Ovary (tissue), 10 donors: ENCODE measurements at regions of chr11 and their contacts with region 1.

Region 1: GRCh38 chr11:76551400-76551799 is 106.6 kb downstream of the EMSY start:
- DNase-seq: no peak
- H3K4me3 ChIP-seq: no peak overlapping the region
- H3K27ac ChIP-seq: no peak overlapping the region
- H3K4me1 ChIP-seq: no peaks in the 10 kb centered on the region
- H3K27me3 ChIP-seq: no peaks in the 10 kb centered on the region
- CTCF ChIP-seq: peak in 1 of 3 donors; percentile 28
- EP300 ChIP-seq: no peak
- POLR2A ChIP-seq: no peak

Region 2: DNA sequence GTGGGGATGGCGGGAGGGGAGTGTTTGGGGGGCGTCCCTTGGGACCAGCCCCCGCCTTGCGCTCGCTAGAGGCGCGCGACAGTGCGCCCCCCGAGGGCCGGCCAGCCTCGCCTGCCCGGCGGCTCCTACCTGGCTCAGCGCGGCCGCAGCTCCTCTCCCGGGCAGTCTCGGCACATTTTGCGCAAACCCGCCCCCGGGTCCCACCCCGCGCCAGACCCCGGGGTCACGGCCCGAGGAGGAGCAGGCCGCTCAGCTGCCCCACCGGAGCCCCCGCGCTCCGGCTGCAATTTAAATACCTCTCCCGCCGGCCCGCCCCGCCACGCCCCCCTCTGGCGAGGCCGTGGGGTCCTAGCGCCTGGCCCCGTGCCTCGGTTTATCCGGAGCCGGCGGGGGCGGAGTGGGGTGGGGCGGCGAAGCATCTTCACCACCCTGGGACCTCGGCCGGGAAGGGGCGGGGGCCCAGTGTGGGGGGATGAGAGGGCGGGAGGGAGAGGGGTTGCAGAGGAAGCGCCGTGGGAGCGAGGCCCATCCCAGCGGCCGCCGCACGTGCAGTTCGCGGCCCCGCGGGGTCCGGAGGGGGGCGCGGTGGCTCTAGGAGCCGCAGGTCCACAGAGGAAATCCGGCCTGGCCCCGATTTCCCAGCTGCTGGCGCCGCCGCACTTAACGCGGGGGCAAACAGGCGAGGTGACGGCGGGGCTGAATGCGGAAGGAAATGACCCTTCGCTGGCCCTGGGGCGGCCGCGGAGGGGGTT is 119.3 kb after region 1 on chr11 and contains the start of gene LRRC32:
- intact Hi-C with region 1: loop called in 1 of 4 experiments (anchors 5 kb)
- DNase-seq: peak; percentile 61 to 81 (median 75)
- H3K4me3 ChIP-seq: peak within 1 kb of the TSS; percentile 65
- H3K27ac ChIP-seq: peak within 1 kb of the TSS in 1 of 2 donors; percentile 54
- H3K4me1 ChIP-seq: peaks cover 16% of the 10 kb centered on the region
- H3K27me3 ChIP-seq: no peaks in the 10 kb centered on the region
- CTCF ChIP-seq: no peak
- EP300 ChIP-seq: no peak
- POLR2A ChIP-seq: no peak
- total RNA-seq, gene LRRC32: 3.2 to 47.1 (median 29.5) TPM

Region 3: DNA sequence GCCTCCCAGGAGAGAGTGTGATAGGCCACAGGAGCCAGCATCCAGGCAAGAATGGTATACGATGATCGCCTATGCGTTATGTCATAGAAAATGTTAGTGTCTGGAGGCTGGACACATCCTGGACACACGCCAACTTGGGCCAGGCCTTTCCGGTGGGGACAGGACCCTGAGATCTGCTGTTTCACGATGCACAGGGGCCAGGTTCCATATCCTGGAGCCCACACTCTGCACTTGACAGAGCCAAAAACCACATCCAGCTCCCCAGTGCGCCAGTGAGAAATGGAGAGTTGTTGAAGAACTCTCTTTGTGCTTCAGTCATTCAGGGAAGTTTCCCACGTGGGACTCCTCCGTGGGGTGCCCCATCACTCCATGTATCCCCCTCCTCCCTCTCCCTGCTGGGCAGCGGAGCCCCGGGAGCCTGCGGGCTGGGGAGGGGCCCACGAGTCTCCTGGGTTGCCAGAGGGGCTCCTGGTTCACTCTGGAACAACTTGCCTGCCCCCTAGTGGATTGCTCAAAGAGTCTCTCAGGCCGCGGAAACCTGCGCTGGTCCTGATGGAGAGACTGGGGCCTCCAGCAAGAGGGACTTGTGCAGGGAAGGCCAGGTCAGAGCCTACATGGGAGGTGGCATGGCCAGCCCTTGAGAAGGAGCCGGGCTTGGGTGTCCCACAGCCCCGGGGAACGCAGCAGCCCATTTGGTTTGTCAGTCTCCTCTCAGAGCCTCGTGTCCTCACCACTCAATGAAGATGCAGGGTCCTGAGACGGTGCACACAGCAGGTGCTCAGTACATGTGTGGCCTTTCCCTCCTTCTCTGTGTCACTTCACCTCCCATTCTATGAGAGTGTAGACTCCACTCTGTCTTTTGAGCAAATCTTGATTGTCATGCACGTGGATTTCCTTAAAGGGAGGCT is 129.4 kb after region 1 on chr11:
- intact Hi-C with region 1: loop called in 1 of 4 experiments (anchors 5 kb)
- DNase-seq: peak; percentile 70 to 82 (median 79)
- H3K4me3 ChIP-seq: no peak overlapping the region
- H3K27ac ChIP-seq: no peak overlapping the region
- H3K4me1 ChIP-seq: no peaks in the 10 kb centered on the region
- H3K27me3 ChIP-seq: no peaks in the 10 kb centered on the region
- CTCF ChIP-seq: peak; percentile 75 to 95 (median 84)
- EP300 ChIP-seq: no peak
- POLR2A ChIP-seq: no peak

Region 4: DNA sequence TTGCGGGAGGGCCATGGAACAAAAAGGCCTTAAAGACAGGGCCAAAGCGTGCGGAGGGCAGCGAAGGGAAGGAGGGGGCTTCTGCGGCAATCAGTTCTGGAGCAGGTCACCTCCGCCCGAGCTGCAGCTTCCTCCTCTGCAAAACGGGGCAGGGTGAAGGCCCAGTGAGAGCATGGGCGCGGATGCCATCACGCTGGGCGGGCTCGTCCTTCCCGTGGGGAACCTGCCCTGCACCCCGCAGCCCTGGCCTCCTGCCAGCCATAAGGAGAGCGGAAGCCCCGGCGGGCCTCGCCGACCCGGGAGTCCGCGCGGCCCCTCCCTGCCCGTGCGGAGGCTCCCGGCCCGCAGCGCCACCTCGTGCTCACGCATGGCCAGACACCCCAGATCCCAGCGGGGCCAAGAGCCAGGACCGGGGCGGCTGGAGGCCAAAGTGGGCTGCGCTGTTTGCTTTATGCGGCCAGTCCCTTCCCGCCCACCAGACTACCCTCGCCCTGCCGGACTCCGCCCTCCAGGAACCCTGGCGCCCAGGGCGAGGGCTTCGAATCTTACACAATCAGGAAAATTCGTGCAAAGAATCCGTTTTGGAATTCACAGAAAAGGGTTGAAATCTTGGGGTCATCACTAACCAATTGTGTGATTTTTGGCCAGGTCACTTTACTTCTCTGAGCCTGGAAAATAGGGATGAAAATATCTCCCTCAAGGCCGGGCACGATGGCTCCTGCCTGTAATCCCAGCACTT is 247.8 kb after region 1 on chr11:
- intact Hi-C with region 1: no loop called
- DNase-seq: peak; percentile 84 to 95 (median 92)
- H3K4me3 ChIP-seq: peak overlapping the region; percentile 1
- H3K27ac ChIP-seq: peak overlapping the region; percentile 45 to 63
- H3K4me1 ChIP-seq: peaks cover 5% of the 10 kb centered on the region
- H3K27me3 ChIP-seq: no peaks in the 10 kb centered on the region
- CTCF ChIP-seq: peak; percentile 95 to 99 (median 96)
- EP300 ChIP-seq: no peak
- POLR2A ChIP-seq: no peak